ENCODE measurements at regions of chr19 and their contacts with region 1.

Region 1: DNA sequence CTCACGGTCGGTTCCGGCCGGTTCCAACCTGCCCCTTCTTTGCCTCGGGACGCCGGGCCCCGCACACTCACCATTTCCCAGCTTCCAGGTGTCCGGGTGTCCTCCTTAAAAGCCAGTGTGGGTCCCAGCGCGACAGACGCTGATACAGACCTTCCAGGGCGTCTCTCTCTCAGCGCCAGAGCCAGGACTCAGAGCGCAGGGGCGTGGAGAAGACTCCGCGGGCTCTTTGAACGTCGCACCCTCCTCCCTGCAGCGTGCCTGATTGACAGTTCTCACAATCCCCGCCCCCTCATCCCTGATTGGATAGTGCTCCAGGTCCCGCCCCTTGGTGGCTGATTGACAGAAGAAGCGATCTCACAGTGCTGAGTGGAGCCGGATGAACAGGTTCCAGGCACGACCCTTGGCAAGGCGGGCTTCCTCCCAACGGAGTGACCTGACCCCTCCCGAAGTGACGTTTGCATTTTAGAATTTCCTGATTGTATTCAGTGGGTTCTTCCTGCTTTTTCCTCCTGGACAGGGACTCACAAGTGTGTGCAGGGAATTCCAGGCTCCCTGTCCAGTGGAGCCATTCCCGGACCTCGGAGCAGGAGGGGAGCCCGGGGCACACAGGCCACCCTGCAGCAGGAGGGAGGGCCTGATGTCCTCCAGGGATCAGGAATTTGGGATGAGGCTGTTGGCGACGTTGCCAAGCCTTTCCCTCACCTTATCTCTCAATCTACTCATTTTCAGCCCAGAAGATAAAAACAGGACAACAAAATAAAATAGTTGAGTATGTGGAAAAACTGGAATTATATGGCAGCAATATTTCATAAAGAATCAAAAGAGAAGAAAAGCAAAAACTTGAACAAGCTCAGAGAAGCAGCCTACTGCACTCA is at the start of gene ZNF823:
- DNase-seq: peak; percentile 99
- H3K4me3 ChIP-seq: peak within 1 kb of the TSS; percentile 66 to 90 (median 83)
- H3K27ac ChIP-seq: peak within 1 kb of the TSS; percentile 72
- H3K4me1 ChIP-seq: peaks cover 13% of the 10 kb centered on the region
- H3K27me3 ChIP-seq: no peaks in the 10 kb centered on the region
- CTCF ChIP-seq: no peak
- POLR2A ChIP-seq: peak; percentile 86
- total RNA-seq, gene ZNF823: 3.8 and 4.4 TPM in 2 replicates

Region 2: DNA sequence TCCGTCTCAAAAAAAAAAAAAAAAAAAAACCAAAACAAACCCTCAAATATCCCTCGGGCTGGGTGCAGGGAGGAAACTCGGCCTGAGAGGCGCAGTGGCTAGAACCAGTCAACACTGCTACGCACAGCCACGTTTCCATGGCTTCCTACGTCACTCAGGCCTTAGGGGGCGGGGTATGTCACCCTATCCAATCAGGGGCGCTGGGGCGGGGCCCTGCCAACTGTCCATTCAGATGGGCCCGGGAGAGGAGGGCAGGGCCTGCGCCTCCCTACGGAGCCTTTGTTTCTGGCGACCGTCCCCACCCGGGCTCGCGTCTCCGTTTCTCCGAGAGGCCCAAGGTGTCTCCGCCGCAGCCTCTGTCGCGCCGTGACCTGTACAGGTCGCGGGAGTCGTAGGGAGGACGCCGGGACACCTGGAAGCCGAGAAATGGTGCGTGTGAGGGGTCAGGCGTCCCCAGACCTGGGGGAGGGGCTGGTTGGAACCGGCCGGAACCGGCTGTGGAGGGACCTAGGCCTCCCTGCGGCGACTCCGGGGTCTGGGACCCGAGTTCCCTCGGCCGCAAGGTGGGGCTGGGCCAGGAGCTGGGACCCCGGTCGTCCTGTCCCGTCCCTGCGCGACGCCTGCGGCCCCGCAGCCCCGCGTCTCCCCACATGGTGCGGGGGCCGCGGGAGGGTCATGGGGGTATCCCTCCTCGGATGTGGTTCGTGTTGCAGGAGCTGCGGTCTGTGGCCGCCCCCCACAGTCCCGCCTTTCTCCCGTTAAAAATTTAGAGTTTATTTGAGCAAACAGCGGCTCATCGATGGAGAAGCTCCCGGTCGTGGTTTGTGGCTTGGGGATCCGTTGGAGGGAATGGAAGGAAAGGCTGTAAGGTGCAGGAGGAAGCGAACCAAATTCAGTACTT is 141.5 kb before region 1 on chr19 and contains the start of gene ZNF627:
- CTCF ChIA-PET with region 1: no interaction called
- POLR2A ChIA-PET with region 1: no interaction called
- dilution Hi-C with region 1: no loop called
- intact Hi-C with region 1: loop called (anchors 5 kb)
- DNase-seq: peak; percentile 97
- H3K4me3 ChIP-seq: peak within 1 kb of the TSS; percentile 94 to 97 (median 95)
- H3K27ac ChIP-seq: peak within 1 kb of the TSS; percentile 84
- H3K4me1 ChIP-seq: peaks cover 8% of the 10 kb centered on the region
- H3K27me3 ChIP-seq: no peaks in the 10 kb centered on the region
- CTCF ChIP-seq: no peak
- POLR2A ChIP-seq: peak; percentile 95
- total RNA-seq, gene ZNF627: 9.7 and 11.2 TPM in 2 replicates

Region 3: GRCh38 chr19:11673608-11674041 is 65.4 kb before region 1 on chr19:
- CTCF ChIA-PET with region 1: interaction called, 3 read pairs
- POLR2A ChIA-PET with region 1: no interaction called
- dilution Hi-C with region 1: no loop called
- intact Hi-C with region 1: loop called (anchors 2 kb)
- DNase-seq: peak; percentile 81
- H3K4me3 ChIP-seq: peak overlapping the region in 2 of 3 experiments; percentile 36 to 51
- H3K27ac ChIP-seq: no peak overlapping the region
- H3K4me1 ChIP-seq: peaks cover 6% of the 10 kb centered on the region
- H3K27me3 ChIP-seq: no peaks in the 10 kb centered on the region
- CTCF ChIP-seq: peak; percentile 79 to 86
- POLR2A ChIP-seq: no peak

Region 4: GRCh38 chr19:11694533-11695439 is 44.2 kb before region 1 on chr19:
- CTCF ChIA-PET with region 1: interaction called, 26 read pairs
- POLR2A ChIA-PET with region 1: no interaction called
- dilution Hi-C with region 1: no loop called
- intact Hi-C with region 1: loop called (anchors 2 kb)
- DNase-seq: peak; percentile 93
- H3K4me3 ChIP-seq: peak overlapping the region; percentile 66 to 93 (median 76)
- H3K27ac ChIP-seq: peak overlapping the region; percentile 7
- H3K4me1 ChIP-seq: peaks cover 2% of the 10 kb centered on the region
- H3K27me3 ChIP-seq: no peaks in the 10 kb centered on the region
- CTCF ChIP-seq: no peak
- POLR2A ChIP-seq: no peak

Region 5: GRCh38 chr19:11699931-11700794 is 38.8 kb before region 1 on chr19:
- CTCF ChIA-PET with region 1: interaction called, 26 read pairs
- POLR2A ChIA-PET with region 1: no interaction called
- dilution Hi-C with region 1: no loop called
- intact Hi-C with region 1: loop called (anchors 1 kb)
- DNase-seq: peak; percentile 34
- H3K4me3 ChIP-seq: no peak overlapping the region
- H3K27ac ChIP-seq: no peak overlapping the region
- H3K4me1 ChIP-seq: peaks cover under 1% of the 10 kb centered on the region
- H3K27me3 ChIP-seq: no peaks in the 10 kb centered on the region
- CTCF ChIP-seq: peak; percentile 47 to 58
- POLR2A ChIP-seq: no peak

Region 6: DNA sequence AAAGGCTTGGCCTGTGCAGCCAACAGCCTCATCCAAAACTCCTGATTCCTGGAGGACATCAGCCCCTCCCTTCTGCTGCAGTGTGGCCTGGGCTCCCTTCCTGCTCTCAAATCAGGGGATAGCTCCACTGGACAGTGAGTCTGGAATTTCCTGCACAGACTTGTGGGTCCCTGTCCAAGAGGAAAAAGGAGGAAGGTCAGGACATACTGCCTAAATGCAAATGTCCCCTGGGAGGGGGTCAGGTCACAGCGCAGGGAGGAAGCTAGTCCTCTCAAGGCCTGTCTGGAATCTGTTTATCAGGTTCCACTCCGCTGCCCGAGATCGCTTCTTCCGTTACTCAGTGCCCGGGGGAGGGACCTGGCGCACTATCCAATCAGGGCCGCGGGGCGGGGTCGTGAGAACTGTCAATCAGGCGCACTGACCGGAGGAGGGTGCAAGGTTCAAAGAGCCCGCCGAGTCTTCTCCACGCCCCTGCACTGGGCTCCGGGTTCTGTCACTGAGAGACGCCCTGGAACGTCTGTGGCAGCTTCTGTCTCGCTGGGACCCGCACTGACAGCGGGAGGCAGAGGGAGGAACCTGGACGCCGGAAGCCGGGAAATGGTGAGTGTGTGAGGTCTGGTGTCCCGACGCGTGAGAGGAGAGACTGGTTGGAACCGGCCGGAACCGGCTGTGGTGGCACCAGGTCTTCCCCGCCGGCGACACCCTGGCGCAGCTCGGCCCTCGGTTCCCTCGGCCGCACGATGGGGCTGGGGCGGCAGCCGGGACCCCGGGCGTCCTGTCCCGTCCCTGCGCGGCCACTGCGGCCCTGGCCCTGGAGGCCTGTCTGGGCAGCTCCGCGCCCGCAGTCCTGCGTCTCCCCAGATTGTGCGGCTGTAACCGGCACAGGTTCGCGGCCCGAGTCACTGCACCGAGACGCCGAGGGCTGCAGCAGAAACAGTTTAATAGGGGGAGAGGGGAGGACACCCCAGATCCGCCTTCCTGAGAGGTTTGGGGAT is 27.9 kb after region 1 on chr19 and contains the start of gene ZNF441:
- CTCF ChIA-PET with region 1: interaction called, 5 read pairs
- POLR2A ChIA-PET with region 1: no interaction called
- dilution Hi-C with region 1: no loop called
- intact Hi-C with region 1: loop called (anchors 1 kb)
- DNase-seq: peak; percentile 95
- H3K4me3 ChIP-seq: peak within 1 kb of the TSS; percentile 46 to 88 (median 71)
- H3K27ac ChIP-seq: peak within 1 kb of the TSS; percentile 65
- H3K4me1 ChIP-seq: peaks cover 6% of the 10 kb centered on the region
- H3K27me3 ChIP-seq: no peaks in the 10 kb centered on the region
- CTCF ChIP-seq: no peak
- POLR2A ChIP-seq: peak; percentile 69
- total RNA-seq, gene ZNF441: 2.4 and 4.5 TPM in 2 replicates

Region 7: DNA sequence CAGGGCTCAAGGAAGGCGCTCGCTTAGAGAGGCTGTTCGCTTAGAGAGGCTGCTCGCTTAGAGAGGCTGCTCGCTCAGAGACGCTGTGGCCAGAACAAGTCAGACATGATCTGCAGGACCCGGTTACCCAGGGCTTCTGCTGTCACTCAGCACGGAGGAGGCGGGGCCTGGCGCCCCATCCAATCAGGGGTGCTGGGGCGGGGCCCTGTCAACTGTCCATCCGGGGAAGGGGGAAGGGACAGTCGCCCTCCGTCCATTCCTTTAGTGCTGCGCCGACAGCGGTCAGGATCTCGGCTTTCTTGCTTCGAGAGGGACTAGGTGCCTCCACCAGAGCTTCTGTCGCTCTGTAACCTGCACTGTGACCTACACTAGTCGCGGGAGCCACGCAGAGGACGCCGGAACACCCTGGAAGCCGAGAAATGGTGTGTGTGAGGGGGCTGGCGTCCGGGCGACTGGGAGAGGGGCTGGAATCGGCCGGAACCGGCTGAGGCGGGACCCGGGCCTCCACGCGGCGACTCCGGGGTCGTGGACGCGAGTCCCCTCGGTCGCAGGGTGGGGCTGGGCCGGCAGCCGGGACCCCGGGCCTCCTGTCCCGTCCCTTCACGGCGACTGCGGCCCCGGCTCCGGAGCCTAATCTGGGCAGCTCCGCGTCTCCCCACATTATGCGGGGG is 75.2 kb after region 1 on chr19 and contains the start of gene ZNF440:
- CTCF ChIA-PET with region 1: interaction called, 3 read pairs
- POLR2A ChIA-PET with region 1: no interaction called
- dilution Hi-C with region 1: no loop called
- intact Hi-C with region 1: loop called (anchors 2 kb)
- DNase-seq: peak; percentile 95
- H3K4me3 ChIP-seq: peak within 1 kb of the TSS; percentile 61 to 70 (median 69)
- H3K27ac ChIP-seq: no peak within 1 kb of the TSS
- H3K4me1 ChIP-seq: peaks cover 6% of the 10 kb centered on the region
- H3K27me3 ChIP-seq: no peaks in the 10 kb centered on the region
- CTCF ChIP-seq: no peak
- POLR2A ChIP-seq: peak; percentile 95
- total RNA-seq, gene ZNF440: 9.1 and 13.3 TPM in 2 replicates

Measured in endothelial cell of umbilical vein (primary cell).